Dorsolateral prefrontal cortex (tissue), 120 donors: ENCODE measurements at regions of chr2 and their contacts with region 1.

Region 1: DNA sequence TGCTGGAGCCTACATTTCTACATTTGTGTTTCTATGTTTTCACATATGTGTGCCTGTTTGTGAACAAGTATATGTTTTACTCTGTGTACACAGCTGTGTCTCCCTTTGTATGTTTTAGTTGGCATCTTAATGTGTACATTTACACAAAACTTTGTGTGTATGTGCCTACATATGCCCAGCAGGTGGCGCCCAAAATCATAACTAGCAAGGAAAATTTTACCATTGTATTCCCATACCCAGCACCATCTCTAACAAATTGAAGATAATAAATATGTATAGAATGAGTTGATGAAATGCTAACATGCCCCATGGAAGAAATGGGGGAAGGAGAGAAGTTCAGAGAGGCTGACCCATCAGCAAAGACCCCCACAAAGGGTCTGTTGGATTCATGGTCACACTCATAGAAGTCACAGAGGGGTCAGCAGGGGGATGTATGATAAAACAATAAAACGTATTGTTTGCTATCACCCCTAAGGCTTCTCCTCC is 48.1 kb downstream of the PKDCC start:
- DNase-seq: peak in 9 of 10 donors; percentile 64 to 91 (median 75)
- H3K4me3 ChIP-seq: no peak overlapping the region
- H3K27ac ChIP-seq: peak overlapping the region in 1 of 59 donors; percentile 19
- H3K27me3 ChIP-seq: no peaks in the 10 kb centered on the region
- CTCF ChIP-seq: peak; percentile 82 to 98 (median 91)

Region 2: GRCh38 chr2:41998186-41999127 is 97.5 kb before region 1 on chr2:
- intact Hi-C with region 1: no loop called
- DNase-seq: no peak
- H3K4me3 ChIP-seq: no peak overlapping the region
- H3K27ac ChIP-seq: peak overlapping the region in 30 of 59 donors; percentile 0 to 71 (median 36)
- H3K27me3 ChIP-seq: no peaks in the 10 kb centered on the region
- CTCF ChIP-seq: no peak

Region 3: DNA sequence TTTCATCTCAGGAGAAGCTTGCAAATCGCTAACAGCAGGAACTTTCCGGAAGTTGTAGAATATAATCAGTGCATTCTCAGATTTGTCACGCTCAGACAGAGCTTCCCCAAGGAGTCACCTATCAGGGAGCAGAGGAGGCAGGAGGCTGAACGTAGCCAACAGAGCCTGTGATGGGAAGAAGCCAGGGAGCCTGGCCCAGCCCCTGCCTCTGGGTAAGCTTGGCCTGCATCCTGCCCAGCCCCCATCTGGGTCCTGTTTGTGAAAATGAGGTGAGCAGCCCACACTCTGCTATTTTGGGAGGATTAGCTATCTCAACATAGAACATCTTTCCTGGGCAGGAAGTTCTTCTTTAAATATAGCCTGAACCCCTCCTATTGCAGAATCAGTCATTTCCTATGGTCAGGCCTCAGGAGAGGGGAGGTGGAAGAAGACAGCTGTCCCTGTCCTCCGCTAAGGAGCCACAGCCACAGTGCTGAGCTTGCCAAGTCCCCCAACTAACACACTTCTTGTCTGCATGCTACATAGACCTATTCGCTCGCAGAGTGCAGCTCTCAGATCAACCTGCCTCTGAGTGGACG is 67.3 kb before region 1 on chr2:
- intact Hi-C with region 1: no loop called
- DNase-seq: peak in 7 of 10 donors; percentile 62 to 83 (median 66)
- H3K4me3 ChIP-seq: no peak overlapping the region
- H3K27ac ChIP-seq: peak overlapping the region in 48 of 59 donors; percentile 4 to 82 (median 61)
- H3K27me3 ChIP-seq: no peaks in the 10 kb centered on the region
- CTCF ChIP-seq: no peak

Region 4: DNA sequence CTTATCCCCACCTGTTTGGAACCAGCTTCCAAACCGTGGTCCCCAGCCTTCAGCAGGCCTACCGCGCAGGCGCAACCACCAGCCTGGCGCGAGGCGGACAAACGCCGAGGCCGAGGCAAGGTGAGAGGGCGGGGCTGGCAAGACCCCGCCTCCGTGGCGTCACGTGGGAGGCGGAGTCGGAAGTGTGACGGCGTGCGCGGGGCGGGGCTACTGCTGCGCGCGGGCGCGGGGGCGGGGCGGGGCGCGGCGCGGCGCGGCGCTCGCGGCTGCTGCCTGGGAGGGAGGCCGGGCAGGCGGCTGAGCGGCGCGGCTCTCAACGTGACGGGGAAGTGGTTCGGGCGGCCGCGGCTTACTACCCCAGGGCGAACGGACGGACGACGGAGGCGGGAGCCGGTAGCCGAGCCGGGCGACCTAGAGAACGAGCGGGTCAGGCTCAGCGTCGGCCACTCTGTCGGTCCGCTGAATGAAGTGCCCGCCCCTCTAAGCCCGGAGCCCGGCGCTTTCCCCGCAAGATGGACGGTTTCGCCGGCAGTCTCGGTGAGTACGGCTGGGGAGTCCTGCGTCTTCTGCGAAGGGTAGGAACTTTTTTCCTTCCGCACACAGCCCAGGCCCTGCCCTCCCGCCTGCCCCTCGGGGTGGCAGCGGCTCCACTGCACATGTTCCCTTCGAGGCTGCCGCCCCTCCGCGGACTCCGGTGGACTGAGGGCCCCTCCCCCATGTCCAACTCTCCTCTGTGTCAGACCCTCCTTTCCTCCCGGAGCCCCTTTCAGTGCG is 73.3 kb after region 1 on chr2 and contains the start of gene EML4:
- intact Hi-C with region 1: loop called in 1 of 2 experiments (anchors 2 kb)
- DNase-seq: peak; percentile 84 to 96 (median 92)
- H3K4me3 ChIP-seq: peak within 1 kb of the TSS; percentile 59 to 97 (median 88)
- H3K27ac ChIP-seq: peak within 1 kb of the TSS in 58 of 59 donors; percentile 28 to 92 (median 76)
- H3K27me3 ChIP-seq: no peaks in the 10 kb centered on the region
- CTCF ChIP-seq: peak in 2 of 56 donors; percentile 11 to 14
- total RNA-seq, gene EML4: 14.0 to 28.7 (median 20.0) TPM

Region 5: GRCh38 chr2:42196403-42197267 is 100.7 kb after region 1 on chr2:
- intact Hi-C with region 1: loop called in 1 of 2 experiments (anchors 5 kb)
- DNase-seq: peak in 1 of 10 donors; percentile 32
- H3K4me3 ChIP-seq: no peak overlapping the region
- H3K27ac ChIP-seq: no peak overlapping the region
- H3K27me3 ChIP-seq: no peaks in the 10 kb centered on the region
- CTCF ChIP-seq: peak in 55 of 56 donors; percentile 27 to 67 (median 47)

Region 6: DNA sequence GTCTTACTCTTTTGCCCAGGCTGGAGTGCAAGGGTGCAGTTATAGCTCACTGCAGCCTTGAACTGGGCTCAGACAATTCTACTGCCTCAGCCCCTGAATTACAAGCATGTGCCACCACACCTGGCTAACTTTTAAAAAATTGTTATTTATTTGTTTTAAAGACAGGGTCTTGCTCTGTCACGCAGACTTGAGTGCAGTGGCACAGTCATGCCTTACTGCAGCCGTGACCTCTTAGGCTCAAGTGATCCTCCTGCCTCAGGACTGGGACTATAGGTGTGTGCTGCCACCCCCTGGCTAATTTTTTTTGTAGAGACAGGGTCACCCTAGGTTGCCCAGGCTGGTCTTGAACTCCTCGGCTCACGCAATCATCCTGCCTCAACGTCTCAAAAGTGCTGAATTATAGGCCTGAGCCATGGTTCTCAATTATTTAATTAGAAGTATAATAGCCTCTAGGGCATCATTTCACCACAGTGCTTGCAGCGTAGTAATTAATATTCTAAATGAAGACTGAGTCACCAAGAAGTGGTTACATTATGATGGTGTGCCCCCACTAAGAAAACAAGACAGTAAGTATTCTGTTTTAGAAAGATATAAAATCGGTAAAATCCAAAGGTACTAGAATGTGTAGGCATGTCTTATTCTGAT is 142.8 kb after region 1 on chr2:
- intact Hi-C with region 1: loop called (anchors 5 to 10 kb)
- DNase-seq: peak in 2 of 10 donors; percentile 18 to 37
- H3K4me3 ChIP-seq: no peak overlapping the region
- H3K27ac ChIP-seq: no peak overlapping the region
- H3K27me3 ChIP-seq: no peaks in the 10 kb centered on the region
- CTCF ChIP-seq: peak in 49 of 56 donors; percentile 2 to 70 (median 42)

Region 7: DNA sequence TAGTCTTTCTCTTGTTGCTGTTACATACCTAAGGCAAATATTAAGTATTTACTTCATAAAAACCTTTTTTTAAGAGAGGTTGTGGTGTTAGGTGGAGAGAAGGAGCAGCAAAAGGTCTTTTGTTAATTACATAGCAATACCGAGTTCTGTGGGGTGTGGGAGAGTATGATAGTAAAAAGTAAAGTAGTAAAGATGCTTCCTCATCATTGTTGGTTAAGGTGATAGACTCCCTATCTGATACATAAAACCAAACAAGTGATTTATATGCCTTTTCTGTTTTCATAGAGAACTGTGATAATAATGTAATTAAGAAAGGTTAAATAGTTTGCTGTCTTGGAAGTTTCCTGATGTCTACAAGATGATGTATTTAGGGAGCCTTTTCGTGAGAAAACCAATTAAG is 148.6 kb after region 1 on chr2:
- intact Hi-C with region 1: loop called (anchors 5 to 10 kb)
- DNase-seq: no peak
- H3K4me3 ChIP-seq: no peak overlapping the region
- H3K27ac ChIP-seq: no peak overlapping the region
- H3K27me3 ChIP-seq: no peaks in the 10 kb centered on the region
- CTCF ChIP-seq: no peak

Region 8: GRCh38 chr2:42331569-42332284 is 235.8 kb after region 1 on chr2:
- intact Hi-C with region 1: loop called in 1 of 2 experiments (anchors 2 kb)
- DNase-seq: no peak
- H3K4me3 ChIP-seq: no peak overlapping the region
- H3K27ac ChIP-seq: no peak overlapping the region
- H3K27me3 ChIP-seq: no peaks in the 10 kb centered on the region
- CTCF ChIP-seq: no peak